ENCODE measurements at regions of chr3 and their contacts with region 1.

Region 1: DNA sequence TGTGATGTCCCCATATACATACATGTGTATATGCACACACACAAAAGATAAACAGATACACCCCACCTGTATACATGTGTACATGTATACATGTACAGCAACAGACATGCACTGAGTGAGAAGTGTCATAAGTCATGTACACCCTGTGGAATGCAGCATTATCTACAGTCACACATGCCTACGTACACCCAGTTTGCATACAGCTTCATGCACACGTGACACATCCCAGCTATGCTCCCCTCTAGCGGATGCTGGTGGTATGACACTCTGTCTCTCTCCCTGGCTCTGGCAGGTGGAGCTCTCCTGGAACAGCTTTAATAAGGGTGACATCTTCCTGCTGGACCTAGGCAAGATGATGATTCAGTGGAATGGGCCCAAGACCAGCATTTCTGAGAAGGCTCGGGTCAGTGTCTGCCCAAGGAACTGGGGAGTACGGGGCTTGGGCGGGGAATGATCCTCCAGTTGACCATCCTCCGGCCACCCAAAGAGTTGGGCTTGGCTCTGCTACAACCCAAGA is 6.3 kb downstream of the VILL start:
- DNase-seq: peak; percentile 55
- H3K4me3 ChIP-seq: no peak overlapping the region
- H3K27ac ChIP-seq: no peak overlapping the region
- H3K27me3 ChIP-seq: peaks cover 1% of the 10 kb centered on the region
- CTCF ChIP-seq: peak; percentile 87

Region 2: DNA sequence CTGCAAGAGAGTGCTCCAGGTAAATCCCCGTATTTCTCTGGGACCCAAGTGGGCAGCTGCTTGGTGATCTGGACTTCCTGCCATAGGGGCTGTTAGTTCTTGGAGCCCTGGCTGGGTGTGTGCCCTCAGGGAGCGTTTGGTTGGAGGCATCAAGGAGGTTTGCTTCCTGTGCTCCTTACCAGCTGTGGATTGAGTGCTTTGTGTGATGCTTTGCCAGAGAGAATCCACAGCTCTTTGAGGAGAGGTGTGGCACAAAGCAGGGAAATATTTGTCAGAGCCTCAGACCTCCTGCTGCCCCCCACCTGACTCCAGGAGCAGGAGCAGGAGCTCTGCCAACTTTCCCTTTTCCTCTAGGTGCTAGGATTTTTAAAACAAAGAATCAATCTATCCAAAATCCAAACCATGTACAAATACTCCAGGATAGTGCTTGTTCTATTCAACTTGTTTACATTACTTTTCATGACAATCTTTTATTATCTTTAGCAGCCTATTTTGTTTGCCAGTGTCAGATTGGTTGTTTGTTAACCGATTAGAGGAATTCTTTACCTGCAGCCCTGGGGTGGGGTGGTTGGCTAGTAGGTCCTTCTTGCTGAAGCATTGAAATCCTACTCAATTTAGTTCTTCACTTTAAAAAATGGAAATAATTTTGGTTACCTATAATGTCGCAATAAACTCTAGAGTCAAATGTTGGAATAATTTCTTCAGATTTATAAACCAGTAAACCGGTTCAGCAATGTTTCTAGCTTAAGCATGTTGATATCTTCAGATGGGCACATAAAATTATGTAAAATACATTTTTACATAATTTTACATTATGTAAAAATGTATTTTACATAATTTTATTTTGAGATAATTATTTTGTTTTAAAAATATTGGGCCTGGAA is 132.7 kb before region 1 on chr3:
- CTCF ChIA-PET with region 1: interaction called, 11 read pairs
- POLR2A ChIA-PET with region 1: no interaction called
- DNase-seq: no peak
- H3K4me3 ChIP-seq: peak overlapping the region; percentile 32
- H3K27ac ChIP-seq: no peak overlapping the region
- H3K27me3 ChIP-seq: no peaks in the 10 kb centered on the region
- CTCF ChIP-seq: no peak

Region 3: DNA sequence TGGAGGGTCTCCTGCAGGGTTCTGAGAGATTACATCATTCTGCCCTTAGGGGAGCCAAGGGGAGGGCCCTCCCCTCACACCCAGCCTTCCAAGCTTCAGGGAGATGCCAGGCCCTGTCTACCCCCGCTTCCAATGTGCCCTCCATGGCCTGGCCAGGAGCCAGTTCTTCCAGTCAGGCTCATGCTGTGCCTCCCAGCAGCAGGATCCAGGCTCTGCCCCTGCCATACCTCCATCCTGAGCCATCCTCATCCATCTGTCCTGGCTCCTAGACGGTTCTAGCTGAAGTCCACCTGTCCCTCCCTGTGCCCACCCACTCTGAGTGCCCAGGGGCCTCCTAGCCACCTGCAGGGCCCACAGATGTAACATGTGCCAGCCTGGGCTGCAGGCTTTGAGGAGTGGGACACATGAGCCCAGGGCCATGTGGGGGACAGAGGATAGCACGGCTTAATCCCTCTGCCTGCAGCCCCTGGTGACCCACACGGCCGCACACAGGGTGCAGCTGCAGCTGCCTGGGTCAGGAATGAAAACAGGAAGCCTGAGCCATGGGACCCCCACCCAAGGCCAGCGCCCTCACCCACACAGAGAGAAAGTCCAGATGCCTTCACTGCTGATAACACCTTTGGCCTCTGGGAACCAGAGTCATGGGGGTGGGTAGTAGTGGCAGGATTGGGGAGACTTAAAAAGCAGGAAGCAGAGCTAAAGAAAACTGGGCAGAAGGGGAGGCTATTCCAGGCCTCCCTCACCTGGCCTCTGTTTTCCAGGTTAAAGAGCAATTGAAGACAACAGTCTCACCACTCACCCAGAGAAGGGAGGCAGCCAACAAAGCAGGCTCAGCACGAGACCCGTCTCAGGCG is 20.8 kb after region 1 on chr3:
- CTCF ChIA-PET with region 1: interaction called, 16 read pairs
- POLR2A ChIA-PET with region 1: interaction called, 3 read pairs
- DNase-seq: no peak
- H3K4me3 ChIP-seq: no peak overlapping the region
- H3K27ac ChIP-seq: no peak overlapping the region
- H3K27me3 ChIP-seq: no peaks in the 10 kb centered on the region
- CTCF ChIP-seq: no peak

Region 4: DNA sequence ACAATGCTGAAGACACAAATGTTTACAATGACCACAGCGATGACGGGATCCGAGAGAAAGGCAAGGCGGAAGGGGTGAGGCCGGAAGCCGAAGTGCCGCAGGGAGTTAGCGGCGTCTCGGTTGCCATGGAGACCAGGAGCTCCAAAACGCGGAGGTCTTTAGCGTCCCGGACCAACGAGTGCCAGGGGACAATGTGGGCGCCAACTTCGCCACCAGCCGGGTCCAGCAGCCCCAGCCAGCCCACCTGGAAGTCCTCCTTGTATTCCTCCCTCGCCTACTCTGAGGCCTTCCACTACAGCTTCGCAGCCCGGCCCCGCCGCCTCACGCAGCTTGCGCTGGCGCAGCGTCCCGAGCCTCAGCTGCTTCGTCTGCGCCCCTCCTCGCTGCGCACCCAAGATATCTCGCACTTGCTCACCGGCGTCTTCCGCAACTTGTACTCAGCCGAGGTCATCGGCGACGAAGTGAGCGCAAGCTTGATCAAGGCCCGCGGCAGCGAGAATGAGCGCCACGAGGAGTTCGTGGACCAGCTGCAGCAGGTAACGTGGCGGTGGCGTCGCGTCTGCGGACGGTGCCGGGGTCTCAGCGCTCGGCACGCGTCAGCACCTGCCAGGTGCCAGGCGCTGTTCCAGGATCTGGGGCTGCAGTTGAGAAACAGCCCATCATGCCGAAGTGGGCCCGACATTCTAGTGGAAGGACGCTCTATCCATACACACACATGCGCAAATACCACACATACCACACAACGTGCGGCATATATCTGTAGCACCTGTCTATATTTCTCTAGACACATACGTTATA is 42.5 kb after region 1 on chr3 and contains the start of gene DLEC1:
- CTCF ChIA-PET with region 1: no interaction called
- POLR2A ChIA-PET with region 1: no interaction called
- DNase-seq: no peak
- H3K4me3 ChIP-seq: peak within 1 kb of the TSS; percentile 60
- H3K27ac ChIP-seq: no peak within 1 kb of the TSS
- H3K27me3 ChIP-seq: no peaks in the 10 kb centered on the region
- CTCF ChIP-seq: no peak
- polyA plus RNA-seq, gene DLEC1: 0.04 and 0.06 TPM in 2 replicates

Region 5: DNA sequence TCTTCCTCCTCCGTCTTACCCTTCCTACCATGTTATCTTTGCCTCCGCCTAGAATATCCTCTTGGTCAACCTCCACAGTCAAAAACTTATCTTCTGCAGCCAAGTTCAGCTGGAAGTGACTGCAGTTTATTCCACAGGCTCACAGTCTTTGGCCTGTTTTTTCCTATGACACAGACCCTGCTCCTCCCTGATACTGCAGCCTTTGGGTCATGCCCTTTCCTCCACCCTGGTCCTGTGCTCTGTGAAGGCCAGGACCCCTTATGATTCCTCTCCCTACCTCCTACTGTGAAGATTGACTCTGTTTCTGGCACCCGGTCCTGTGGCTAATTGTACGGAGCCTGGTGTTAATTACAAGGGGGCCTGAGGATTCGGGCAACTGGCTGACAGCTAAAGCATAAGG is 701.9 kb after region 1 on chr3:
- CTCF ChIA-PET with region 1: no interaction called
- POLR2A ChIA-PET with region 1: no interaction called
- DNase-seq: no peak
- H3K4me3 ChIP-seq: no peak overlapping the region
- H3K27ac ChIP-seq: no peak overlapping the region
- H3K27me3 ChIP-seq: peaks cover 5% of the 10 kb centered on the region
- CTCF ChIP-seq: no peak